Mammary epithelial cell (primary cell): ENCODE measurements at regions of chr22 and their contacts with region 1.

Region 1: GRCh38 chr22:30121960-30122359 is 41.7 kb downstream of the HORMAD2 start:
- DNase-seq: no peak
- H3K4me3 ChIP-seq: no peak overlapping the region
- H3K27ac ChIP-seq: no peak overlapping the region
- H3K4me1 ChIP-seq: peaks cover 3% of the 10 kb centered on the region
- H3K27me3 ChIP-seq: no peaks in the 10 kb centered on the region
- CTCF ChIP-seq: no peak

Region 2: DNA sequence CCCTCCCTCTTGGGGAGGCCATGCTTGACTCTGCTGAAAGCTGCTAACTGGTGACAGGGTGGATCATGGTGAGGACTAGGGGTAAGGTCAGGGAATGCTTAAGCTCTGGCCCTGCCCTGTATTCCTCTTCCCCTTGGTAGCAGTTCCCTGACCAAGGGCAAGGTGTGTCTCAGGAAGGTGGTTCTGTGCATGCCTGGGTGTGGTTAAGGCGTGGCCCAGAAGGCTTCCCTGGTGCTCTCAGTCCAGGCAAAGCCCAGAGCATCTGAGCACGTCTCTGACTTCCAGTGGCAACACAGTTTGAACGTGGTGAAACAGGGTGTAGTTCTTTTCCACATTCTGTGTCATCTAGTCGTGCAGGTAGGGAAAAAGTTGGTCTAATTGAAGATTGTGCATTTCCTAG is 94.8 kb before region 1 on chr22:
- CTCF ChIA-PET with region 1: no interaction called
- dilution Hi-C with region 1: loop called (anchors 5 kb)
- in situ Hi-C with region 1: no loop called
- intact Hi-C with region 1: no loop called
- DNase-seq: peak; percentile 52
- H3K4me3 ChIP-seq: no peak overlapping the region
- H3K27ac ChIP-seq: no peak overlapping the region
- H3K4me1 ChIP-seq: peaks cover 16% of the 10 kb centered on the region
- H3K27me3 ChIP-seq: no peaks in the 10 kb centered on the region
- CTCF ChIP-seq: no peak

Region 3: GRCh38 chr22:30159561-30160353 is 37.8 kb after region 1 on chr22:
- CTCF ChIA-PET with region 1: no interaction called
- dilution Hi-C with region 1: no loop called
- in situ Hi-C with region 1: no loop called
- intact Hi-C with region 1: loop called (anchors 5 kb)
- DNase-seq: peak; percentile 52
- H3K4me3 ChIP-seq: no peak overlapping the region
- H3K27ac ChIP-seq: no peak overlapping the region
- H3K4me1 ChIP-seq: no peaks in the 10 kb centered on the region
- H3K27me3 ChIP-seq: no peaks in the 10 kb centered on the region
- CTCF ChIP-seq: no peak

Region 4: GRCh38 chr22:30183861-30184278 is 61.9 kb after region 1 on chr22:
- CTCF ChIA-PET with region 1: no interaction called
- dilution Hi-C with region 1: loop called (anchors 5 kb)
- in situ Hi-C with region 1: no loop called
- intact Hi-C with region 1: loop called (anchors 2 kb)
- DNase-seq: peak; percentile 27
- H3K4me3 ChIP-seq: no peak overlapping the region
- H3K27ac ChIP-seq: no peak overlapping the region
- H3K4me1 ChIP-seq: peaks cover 4% of the 10 kb centered on the region
- H3K27me3 ChIP-seq: no peaks in the 10 kb centered on the region
- CTCF ChIP-seq: no peak